Esophagus muscularis mucosa (tissue), 4 donors: ENCODE measurements at regions of chr21 and their contacts with region 1.

Region 1: DNA sequence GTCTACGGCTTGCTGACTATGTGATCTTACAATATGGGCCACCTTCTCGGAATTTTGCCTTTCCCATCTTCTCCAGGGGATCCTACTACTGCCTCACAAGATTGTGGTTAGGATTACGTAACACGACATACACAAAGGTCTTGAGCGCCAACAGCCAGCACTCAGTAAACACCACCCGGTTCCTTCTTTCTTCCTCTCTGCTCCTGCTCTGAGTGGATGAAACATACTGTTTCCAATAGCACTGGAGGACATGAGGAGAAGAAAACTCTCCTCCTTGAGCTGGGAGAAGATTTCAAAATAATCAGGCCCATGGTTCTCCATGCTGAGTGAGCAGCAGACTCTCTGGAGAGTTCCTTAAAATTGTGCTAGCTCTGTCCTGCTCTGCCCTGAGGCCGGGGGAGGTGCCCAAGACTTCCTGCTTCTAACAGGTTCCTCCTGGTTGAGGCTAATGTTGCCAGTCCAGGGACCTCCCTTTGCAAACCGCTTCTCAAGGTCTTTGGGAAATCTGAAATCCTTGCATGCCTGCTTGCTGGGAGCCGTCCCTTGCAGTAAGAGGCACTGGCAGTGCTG is 29.4 kb upstream of the MX1 start:
- DNase-seq: no peak
- H3K4me3 ChIP-seq: no peak overlapping the region
- H3K27ac ChIP-seq: no peak overlapping the region
- H3K4me1 ChIP-seq: no peaks in the 10 kb centered on the region
- H3K27me3 ChIP-seq: peaks cover 0 to 5% (median 0%) of the 10 kb centered on the region in 4 donors
- CTCF ChIP-seq: no peak
- EP300 ChIP-seq: no peak
- POLR2A ChIP-seq: no peak

Region 2: GRCh38 chr21:41294539-41295231 is 101.9 kb before region 1 on chr21:
- intact Hi-C with region 1: loop called (anchors 10 kb)
- DNase-seq: no peak
- H3K4me3 ChIP-seq: no peak overlapping the region
- H3K27ac ChIP-seq: no peak overlapping the region
- H3K4me1 ChIP-seq: no peaks in the 10 kb centered on the region
- H3K27me3 ChIP-seq: peaks cover 0 to 56% (median 2%) of the 10 kb centered on the region in 4 donors
- CTCF ChIP-seq: no peak
- EP300 ChIP-seq: no peak
- POLR2A ChIP-seq: no peak